Head of caudate nucleus (tissue), 42 donors: ENCODE measurements at regions of chr4 and their contacts with region 1.

Region 1: GRCh38 chr4:48546336-48546735 is 56.3 kb downstream of the ZAR1 start:
- DNase-seq: peak in 37 of 42 donors; percentile 15 to 76 (median 50)

Region 2: GRCh38 chr4:48340965-48341775 is 205.2 kb before region 1 on chr4 and contains the start of gene SLAIN2:
- intact Hi-C with region 1: loop called (anchors 10 kb)
- DNase-seq: peak; percentile 93 to 99 (median 98)